GM18951 (cell line): ENCODE measurements at regions of chr6 and their contacts with region 1.

Region 1: DNA sequence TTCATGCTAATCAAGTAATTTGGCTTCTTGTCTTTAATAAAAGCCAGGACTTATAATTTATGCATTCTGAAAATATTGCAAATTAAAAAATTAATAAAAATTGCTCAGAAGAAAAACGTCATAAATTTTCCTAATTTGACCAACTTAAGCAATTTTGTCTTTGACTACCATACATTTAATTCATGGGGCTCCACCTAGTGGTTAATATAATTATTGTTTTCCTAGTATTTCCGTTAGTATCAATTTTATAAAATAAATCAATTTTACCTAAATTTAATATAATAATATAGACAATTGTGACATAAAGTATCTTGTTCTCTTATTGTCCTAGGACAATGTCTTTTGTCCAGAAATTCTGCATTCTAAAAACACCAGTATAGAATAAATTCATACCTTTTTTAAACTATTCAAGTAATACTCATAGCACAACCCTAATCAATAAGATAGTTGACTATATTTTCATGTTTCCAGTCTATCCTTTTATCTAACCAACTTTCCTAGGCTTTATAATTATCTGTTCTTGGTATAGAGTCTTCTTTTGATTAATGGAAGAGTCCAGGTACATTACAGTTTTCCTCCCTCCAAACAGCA is 319.9 kb downstream of the TRDN start:
- POLR2A ChIP-seq: no peak

Region 2: DNA sequence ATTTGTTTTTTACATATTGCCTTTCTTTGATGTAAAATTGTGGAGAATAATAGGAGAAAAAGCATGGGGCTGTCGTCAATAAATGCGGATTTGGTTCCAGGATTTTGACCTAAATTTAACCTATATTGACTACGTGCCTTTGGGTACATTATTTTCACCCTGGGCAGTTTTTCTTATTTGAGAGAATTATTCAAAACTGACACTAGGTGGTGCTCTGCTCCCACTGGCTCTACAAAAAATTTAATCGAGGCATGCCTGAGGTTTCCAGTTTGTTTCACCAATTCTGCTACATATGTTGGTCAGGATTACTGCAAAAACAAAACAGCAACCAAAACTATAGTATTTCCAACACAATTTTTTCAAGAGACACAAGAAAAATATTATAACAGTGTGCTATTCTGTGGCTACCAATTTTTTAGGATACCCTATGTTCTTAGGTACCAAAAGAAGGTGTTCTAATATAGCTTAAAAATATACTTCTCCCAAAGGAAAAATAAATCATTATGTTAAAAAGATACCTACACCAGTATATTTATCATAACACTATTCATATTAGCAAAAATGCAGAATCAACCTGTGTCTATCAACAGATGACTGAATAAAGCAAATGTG is 585.9 kb before region 1 on chr6:
- in situ Hi-C with region 1: loop called (anchors 25 kb)
- POLR2A ChIP-seq: no peak

Region 3: GRCh38 chr6:122869437-122870024 is 447.3 kb before region 1 on chr6:
- in situ Hi-C with region 1: loop called (anchors 25 kb)
- POLR2A ChIP-seq: no peak

Region 4: GRCh38 chr6:123380257-123380656 is 63.4 kb after region 1 on chr6:
- in situ Hi-C with region 1: no loop called
- POLR2A ChIP-seq: no peak

Region 5: GRCh38 chr6:123712831-123713230 is 396.0 kb after region 1 on chr6:
- in situ Hi-C with region 1: no loop called
- POLR2A ChIP-seq: no peak